Activated naive CD4-positive, alpha-beta T cell treated with anti-CD3 and anti-CD28 coated beads for 36 hours (primary cell): ENCODE measurements at regions of chr1 and their contacts with region 1.

Region 1: GRCh38 chr1:201149400-201149799 is 4.9 kb downstream of the TMEM9 start:
- DNase-seq: no peak
- H3K4me3 Mint-ChIP-seq: no peak overlapping the region
- H3K27ac Mint-ChIP-seq: no peak overlapping the region
- H3K4me1 Mint-ChIP-seq: peaks cover 13% of the 10 kb centered on the region
- H3K27me3 Mint-ChIP-seq: no peaks in the 10 kb centered on the region

Region 2: GRCh38 chr1:201069636-201070035 is 79.8 kb before region 1 on chr1:
- CTCF ChIA-PET with region 1: no interaction called
- intact Hi-C with region 1: no loop called
- DNase-seq: no peak
- H3K4me3 Mint-ChIP-seq: no peak overlapping the region
- H3K27ac Mint-ChIP-seq: no peak overlapping the region
- H3K4me1 Mint-ChIP-seq: no peaks in the 10 kb centered on the region
- H3K27me3 Mint-ChIP-seq: no peaks in the 10 kb centered on the region

Region 3: GRCh38 chr1:201184307-201185122 is 35.1 kb after region 1 on chr1:
- CTCF ChIA-PET with region 1: interaction called, 6 read pairs
- intact Hi-C with region 1: loop called (anchors 1 kb)
- DNase-seq: peak; percentile 17
- H3K4me3 Mint-ChIP-seq: no peak overlapping the region
- H3K27ac Mint-ChIP-seq: no peak overlapping the region
- H3K4me1 Mint-ChIP-seq: no peaks in the 10 kb centered on the region
- H3K27me3 Mint-ChIP-seq: peaks cover 13% of the 10 kb centered on the region